Activated B cell treated with CpG ODN at 0.5 μM for 24 hours (primary cell): ENCODE measurements at regions of chr11 and their contacts with region 1.

Region 1: DNA sequence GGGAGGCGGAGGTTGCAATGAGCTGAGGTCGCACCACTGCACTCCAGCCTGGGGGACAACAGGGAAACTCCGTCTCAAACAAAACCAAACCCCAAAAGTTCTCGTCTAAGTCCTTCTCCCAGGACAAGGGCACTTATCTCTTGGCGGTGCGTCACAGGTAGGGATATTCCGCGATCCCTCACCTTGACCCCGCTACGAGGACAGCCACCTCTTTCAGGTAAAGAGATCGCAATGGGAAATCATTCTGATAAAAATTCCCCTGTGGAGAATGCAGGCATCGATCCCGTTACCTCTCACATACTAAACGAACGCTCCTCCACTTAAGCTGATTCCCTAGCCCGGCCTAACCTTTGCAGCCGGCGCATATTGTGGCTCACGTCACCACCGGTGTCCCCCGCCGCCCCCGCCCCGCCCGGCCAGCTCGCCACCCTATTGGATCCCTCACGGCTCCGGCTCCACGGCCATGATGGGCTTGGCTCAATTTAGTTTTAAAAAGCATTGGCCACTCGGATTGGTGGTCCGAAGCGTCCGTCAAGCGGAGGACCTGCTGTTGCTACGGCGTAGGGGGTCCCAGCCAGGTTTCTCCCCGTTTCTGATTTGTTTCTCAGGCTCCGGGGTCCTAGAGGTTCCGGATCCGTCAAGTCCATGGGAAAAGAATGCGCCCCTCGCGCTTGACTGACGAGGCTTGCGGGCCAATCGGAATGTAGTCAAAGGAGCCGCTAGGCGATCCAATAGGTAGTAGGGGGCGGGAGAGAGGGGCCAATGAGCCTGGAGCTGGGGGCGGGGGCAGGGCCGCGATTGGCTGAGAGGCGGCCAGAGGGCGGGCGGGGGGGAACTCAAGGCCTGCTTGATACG is 439 bp upstream of the PPP6R3 start:
- DNase-seq: peak; percentile 81
- ATAC-seq: peak; percentile 92
- H3K4me3 Mint-ChIP-seq: peak overlapping the region; percentile 94
- H3K27ac Mint-ChIP-seq: peak overlapping the region; percentile 97
- H3K4me1 Mint-ChIP-seq: peaks cover 39% of the 10 kb centered on the region
- H3K27me3 Mint-ChIP-seq: no peaks in the 10 kb centered on the region
- CTCF ChIP-seq: no peak

Region 2: DNA sequence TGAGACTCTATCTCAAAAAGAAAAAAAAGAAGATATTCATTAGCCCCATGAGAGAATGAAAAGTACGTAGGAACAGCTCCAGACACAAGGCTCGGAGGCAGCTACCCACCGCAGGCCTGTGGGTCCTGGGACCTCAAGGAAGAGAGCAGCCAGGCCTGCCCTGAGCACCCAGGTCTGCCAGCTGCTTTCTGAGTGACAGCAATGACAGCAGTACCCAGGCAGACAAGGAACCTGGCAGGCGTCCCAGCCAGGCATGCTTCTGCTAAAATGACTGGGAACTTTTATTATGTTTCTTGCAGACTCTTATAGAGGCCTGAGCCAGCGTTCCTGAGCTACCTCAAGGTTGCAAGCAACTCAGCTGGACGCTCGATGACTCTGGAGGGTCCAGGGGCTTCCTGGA is 350.1 kb after region 1 on chr11:
- CTCF ChIA-PET with region 1: no interaction called
- POLR2A ChIA-PET with region 1: interaction called, 13 read pairs
- intact Hi-C with region 1: no loop called
- DNase-seq: no peak
- ATAC-seq: no peak
- H3K4me3 Mint-ChIP-seq: no peak overlapping the region
- H3K27ac Mint-ChIP-seq: no peak overlapping the region
- H3K4me1 Mint-ChIP-seq: peaks cover 31% of the 10 kb centered on the region
- H3K27me3 Mint-ChIP-seq: no peaks in the 10 kb centered on the region
- CTCF ChIP-seq: no peak